Activated T-helper 1 cell treated with anti-CD3 and anti-CD28 coated beads, Interleukin-12 subunit alpha, Interleukin-12 subunit beta, Interleukin-2, Interleukin-4 antibody, amounts not matched to agents 30 ng/mL and 10 ng/mL and 1 ng/mL, durations not matched to agents 14 hours and 24 hours and 36 hours (primary cell): ENCODE measurements at regions of chr12 and their contacts with region 1.

Region 1: GRCh38 chr12:75334384-75335030 is at the start of gene GLIPR1L1:
- DNase-seq: peak; percentile 67
- H3K4me3 Mint-ChIP-seq: peak within 1 kb of the TSS; percentile 70
- H3K27ac Mint-ChIP-seq: no peak within 1 kb of the TSS
- H3K4me1 Mint-ChIP-seq: peaks cover 36% of the 10 kb centered on the region
- H3K27me3 Mint-ChIP-seq: peaks cover 35% of the 10 kb centered on the region
- total RNA-seq, gene GLIPR1L1: not detected in 2 replicates

Region 2: GRCh38 chr12:75322464-75322863 is 12.0 kb before region 1 on chr12:
- intact Hi-C with region 1: no loop called
- DNase-seq: no peak
- H3K4me3 Mint-ChIP-seq: no peak overlapping the region
- H3K27ac Mint-ChIP-seq: no peak overlapping the region
- H3K4me1 Mint-ChIP-seq: no peaks in the 10 kb centered on the region
- H3K27me3 Mint-ChIP-seq: peaks cover 14% of the 10 kb centered on the region

Region 3: GRCh38 chr12:75390899-75391538 is 56.5 kb after region 1 on chr12 and contains the start of gene GLIPR1L2:
- intact Hi-C with region 1: loop called (anchors 2 kb)
- DNase-seq: peak; percentile 82
- H3K4me3 Mint-ChIP-seq: peak within 1 kb of the TSS; percentile 86
- H3K27ac Mint-ChIP-seq: peak within 1 kb of the TSS; percentile 79
- H3K4me1 Mint-ChIP-seq: peaks cover 39% of the 10 kb centered on the region
- H3K27me3 Mint-ChIP-seq: peaks cover 5% of the 10 kb centered on the region
- total RNA-seq, gene GLIPR1L2: not detected in 2 replicates

Region 4: GRCh38 chr12:75658901-75659383 is 324.4 kb after region 1 on chr12:
- intact Hi-C with region 1: loop called (anchors 10 kb)
- DNase-seq: no peak
- H3K4me3 Mint-ChIP-seq: no peak overlapping the region
- H3K27ac Mint-ChIP-seq: peak overlapping the region; percentile 33
- H3K4me1 Mint-ChIP-seq: peaks cover 36% of the 10 kb centered on the region
- H3K27me3 Mint-ChIP-seq: no peaks in the 10 kb centered on the region

Region 5: GRCh38 chr12:76037130-76038103 is 702.9 kb after region 1 on chr12:
- intact Hi-C with region 1: loop called (anchors 1 kb)
- DNase-seq: peak; percentile 26
- H3K4me3 Mint-ChIP-seq: no peak overlapping the region
- H3K27ac Mint-ChIP-seq: peak overlapping the region; percentile 0
- H3K4me1 Mint-ChIP-seq: peaks cover 24% of the 10 kb centered on the region
- H3K27me3 Mint-ChIP-seq: no peaks in the 10 kb centered on the region